Panc1 (cell line): ENCODE measurements at regions of chr2 and their contacts with region 1.

Region 1: GRCh38 chr2:178152033-178152432 is 39.8 kb downstream of the RBM45 start:
- DNase-seq: no peak
- ATAC-seq: no peak
- H3K4me3 ChIP-seq: no peak overlapping the region
- H3K27ac ChIP-seq: no peak overlapping the region
- H3K4me1 ChIP-seq: no peaks in the 10 kb centered on the region
- H3K27me3 ChIP-seq: no peaks in the 10 kb centered on the region
- CTCF ChIP-seq: no peak

Region 2: GRCh38 chr2:178119179-178119922 is 32.7 kb before region 1 on chr2:
- CTCF ChIA-PET with region 1: interaction called, 12 read pairs
- POLR2A ChIA-PET with region 1: no interaction called
- in situ Hi-C with region 1: no loop called
- intact Hi-C with region 1: no loop called
- DNase-seq: no peak
- ATAC-seq: no peak
- H3K4me3 ChIP-seq: no peak overlapping the region
- H3K27ac ChIP-seq: no peak overlapping the region
- H3K4me1 ChIP-seq: no peaks in the 10 kb centered on the region; the same call in 1 of the 2 replicates
- H3K27me3 ChIP-seq: no peaks in the 10 kb centered on the region
- CTCF ChIP-seq: no peak